ENCODE measurements at regions of chr7 and their contacts with region 1.

Region 1: DNA sequence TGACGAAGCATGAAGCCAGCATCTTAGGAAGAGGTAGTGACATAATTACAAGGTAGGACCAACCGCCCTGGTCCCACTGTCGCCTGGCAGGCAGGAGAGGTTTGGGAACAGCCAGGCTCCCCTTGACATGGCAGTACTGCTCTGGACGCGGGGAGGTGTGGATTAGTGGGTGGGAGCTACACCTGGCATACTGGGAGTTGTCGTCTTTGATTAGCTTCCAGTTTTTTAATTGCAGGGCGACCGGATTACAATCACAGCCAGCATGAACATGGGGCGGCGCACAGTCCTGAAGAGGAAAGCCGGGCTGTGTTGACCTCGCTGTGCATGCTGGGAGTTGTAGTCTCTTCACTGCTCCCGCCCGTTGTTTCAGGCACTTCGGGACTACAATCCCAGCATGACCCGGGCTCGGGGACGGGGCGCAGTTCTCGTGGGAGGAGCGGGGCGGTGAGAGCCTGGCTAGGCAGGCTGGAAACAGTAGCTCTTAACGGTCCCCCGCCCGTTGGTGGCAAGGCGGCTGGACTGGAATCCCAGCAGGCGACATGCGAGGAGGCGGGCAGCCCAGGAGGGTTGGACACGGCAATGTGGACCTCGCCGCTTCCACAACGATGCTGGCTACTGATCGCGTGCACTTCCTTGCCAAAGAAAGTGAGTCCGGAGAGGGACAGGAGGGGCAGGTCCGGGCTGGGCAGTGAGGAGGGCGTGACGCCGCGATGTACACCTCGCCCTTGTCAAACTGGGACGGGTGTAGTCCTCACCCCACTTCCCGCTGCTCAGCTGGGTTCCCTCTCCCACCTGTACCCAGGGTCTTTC is 98.0 kb upstream of the ZNF722 start:
- DNase-seq: peak; percentile 93 to 99 (median 98)
- H3K4me3 ChIP-seq: peak overlapping the region; percentile 62 to 100 (median 75)
- H3K27ac ChIP-seq: peak overlapping the region; percentile 50 to 81
- H3K4me1 ChIP-seq: peaks cover 0 to 10% (median 5%) of the 10 kb centered on the region in 4 experiments
- H3K27me3 ChIP-seq: no peaks in the 10 kb centered on the region

Region 2: GRCh38 chr7:63925623-63926460 is 25.2 kb after region 1 on chr7:
- CTCF ChIA-PET with region 1: interaction called, 16 read pairs
- POLR2A ChIA-PET with region 1: interaction called, 9 read pairs
- DNase-seq: peak; percentile 94 to 99 (median 98)
- H3K4me3 ChIP-seq: peak overlapping the region; percentile 61 to 99 (median 78)
- H3K27ac ChIP-seq: peak overlapping the region; percentile 96 to 97
- H3K4me1 ChIP-seq: peaks cover 0 to 20% (median 4%) of the 10 kb centered on the region in 4 experiments
- H3K27me3 ChIP-seq: no peaks in the 10 kb centered on the region

Measured in common myeloid progenitor, CD34-positive (primary cell).